GM12878 (cell line): ENCODE measurements at regions of chr15 and their contacts with region 1.

Region 1: GRCh38 chr15:40941528-40942336 is 11.5 kb upstream of the CHAC1 start:
- DNase-seq: no peak
- ATAC-seq: peak; percentile 82
- H3K4me3 ChIP-seq: peak overlapping the region; percentile 73
- H3K27ac ChIP-seq: peak overlapping the region; percentile 81
- H3K4me1 ChIP-seq: peaks cover 23% of the 10 kb centered on the region
- H3K27me3 ChIP-seq: no peaks in the 10 kb centered on the region
- CTCF ChIP-seq: peak; percentile 29 to 69 (median 43); a peak in 4 of 6 replicates
- EP300 ChIP-seq: no peak
- POLR2A ChIP-seq: peak; percentile 75
- RAD21 ChIP-seq: peak; percentile 58

Region 2: DNA sequence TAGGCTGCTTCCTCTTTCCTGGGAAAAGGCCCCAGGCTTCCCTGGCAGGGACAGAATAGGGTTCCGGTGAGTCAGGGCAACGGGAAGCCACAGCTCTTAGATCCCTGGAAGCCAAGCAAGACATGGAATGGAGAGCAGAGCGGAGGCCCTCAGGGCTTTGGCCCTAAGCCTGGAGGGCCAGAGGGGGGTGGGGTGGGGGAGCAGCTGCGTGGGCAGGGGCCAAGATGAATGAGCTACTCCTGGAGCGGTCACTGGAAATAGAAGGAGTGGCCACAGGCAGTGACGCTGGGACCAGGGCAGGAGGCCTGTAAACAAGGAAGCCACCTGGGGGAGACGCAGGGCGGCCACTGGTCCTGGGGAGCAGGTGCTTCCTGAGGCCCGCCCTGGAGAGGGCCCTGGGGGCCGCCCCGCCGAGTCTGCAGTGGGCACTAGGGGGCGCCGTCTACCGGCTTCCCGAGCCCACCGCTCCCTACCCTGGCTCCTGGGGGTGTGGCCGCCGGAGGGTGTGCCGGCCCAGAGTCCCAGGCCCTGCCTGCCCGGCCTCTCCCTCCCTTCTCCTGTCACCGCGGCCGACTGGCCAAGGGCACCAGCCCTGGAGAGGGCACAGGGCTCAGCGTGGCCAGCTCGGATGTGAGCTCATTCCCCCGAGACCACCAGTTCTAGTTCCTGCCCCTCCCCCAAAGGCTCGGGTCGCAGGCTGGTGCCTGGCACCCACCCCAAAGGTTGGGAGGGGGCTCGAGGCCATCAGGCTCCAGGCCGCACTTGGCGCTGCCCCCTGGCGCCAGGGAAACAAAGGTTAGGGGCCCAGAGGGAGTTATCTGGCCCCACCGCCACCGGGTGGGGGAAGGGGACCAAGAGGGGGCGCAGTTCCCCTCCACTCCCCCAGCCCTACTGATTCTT is 35.4 kb before region 1 on chr15:
- CTCF ChIA-PET with region 1: interaction called, 69 read pairs
- POLR2A ChIA-PET with region 1: interaction called, 3 read pairs
- RAD21 ChIA-PET with region 1: interaction called, 11 read pairs
- SMC1A ChIA-PET with region 1: interaction called, 18 read pairs
- in situ Hi-C with region 1: no loop called
- intact Hi-C with region 1: loop called (anchors 5 kb)
- DNase-seq: no peak
- ATAC-seq: peak; percentile 91
- H3K4me3 ChIP-seq: peak overlapping the region; percentile 60
- H3K27ac ChIP-seq: peak overlapping the region; percentile 49
- H3K4me1 ChIP-seq: peaks cover 24% of the 10 kb centered on the region
- H3K27me3 ChIP-seq: no peaks in the 10 kb centered on the region
- CTCF ChIP-seq: peak; percentile 73 to 90 (median 89)
- EP300 ChIP-seq: no peak
- POLR2A ChIP-seq: peak; percentile 52; the same call in 1 of the 2 replicates
- RAD21 ChIP-seq: peak; percentile 66

Region 3: DNA sequence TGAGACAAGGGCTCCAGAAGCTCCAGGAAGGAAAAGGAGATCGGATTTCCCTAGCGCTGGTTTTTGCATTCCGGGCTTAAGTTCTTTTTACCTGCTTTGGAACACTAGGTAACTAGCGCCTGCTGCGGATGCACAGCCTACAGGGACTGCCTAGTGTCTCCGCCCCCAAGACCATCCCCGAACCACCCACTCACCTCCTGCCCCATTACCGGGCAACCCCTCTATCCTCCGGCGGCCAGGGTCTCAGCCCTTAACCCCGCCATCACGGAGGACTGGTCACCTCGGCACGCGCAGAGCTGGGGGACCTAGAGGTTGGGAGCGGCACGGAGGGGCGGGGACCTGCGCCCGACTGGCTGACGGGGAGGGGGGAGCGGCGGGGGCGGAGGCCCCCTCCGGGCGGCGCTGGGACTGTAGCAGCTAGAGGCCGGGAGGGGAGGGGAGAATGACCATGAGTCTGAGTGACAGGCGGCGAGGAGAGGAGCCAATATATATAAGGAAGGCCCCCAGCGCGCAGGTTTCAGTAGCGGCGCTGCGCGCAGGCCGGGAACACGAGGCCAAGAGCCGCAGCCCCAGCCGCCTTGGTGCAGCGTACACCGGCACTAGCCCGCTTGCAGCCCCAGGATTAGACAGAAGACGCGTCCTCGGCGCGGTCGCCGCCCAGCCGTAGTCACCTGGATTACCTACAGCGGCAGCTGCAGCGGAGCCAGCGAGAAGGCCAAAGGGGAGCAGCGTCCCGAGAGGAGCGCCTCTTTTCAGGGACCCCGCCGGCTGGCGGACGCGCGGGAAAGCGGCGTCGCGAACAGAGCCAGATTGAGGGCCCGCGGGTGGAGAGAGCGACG is 12.7 kb before region 1 on chr15 and contains the start of gene DLL4:
- CTCF ChIA-PET with region 1: interaction called, 80 read pairs
- POLR2A ChIA-PET with region 1: interaction called, 11 read pairs
- RAD21 ChIA-PET with region 1: interaction called, 36 read pairs
- SMC1A ChIA-PET with region 1: interaction called, 28 read pairs
- in situ Hi-C with region 1: no loop called
- intact Hi-C with region 1: no loop called
- DNase-seq: no peak
- ATAC-seq: peak; percentile 54
- H3K4me3 ChIP-seq: peak within 1 kb of the TSS; percentile 64
- H3K27ac ChIP-seq: no peak within 1 kb of the TSS
- H3K4me1 ChIP-seq: peaks cover 33% of the 10 kb centered on the region
- H3K27me3 ChIP-seq: peaks cover 22 to 31% of the 10 kb centered on the region in 2 experiments
- CTCF ChIP-seq: no peak
- EP300 ChIP-seq: no peak
- POLR2A ChIP-seq: peak; percentile 78
- RAD21 ChIP-seq: no peak
- polyA plus RNA-seq, gene DLL4: not detected

Region 4: GRCh38 chr15:40964006-40964405 is 22.3 kb after region 1 on chr15:
- CTCF ChIA-PET with region 1: interaction called, 10 read pairs
- POLR2A ChIA-PET with region 1: no interaction called
- RAD21 ChIA-PET with region 1: no interaction called
- SMC1A ChIA-PET with region 1: interaction called, 3 read pairs
- in situ Hi-C with region 1: no loop called
- intact Hi-C with region 1: no loop called
- DNase-seq: no peak
- ATAC-seq: peak; percentile 33; the same call in 1 of the 3 replicates
- H3K4me3 ChIP-seq: no peak overlapping the region
- H3K27ac ChIP-seq: no peak overlapping the region
- H3K4me1 ChIP-seq: no peaks in the 10 kb centered on the region
- H3K27me3 ChIP-seq: no peaks in the 10 kb centered on the region; a peak in 1 of 4 replicates
- CTCF ChIP-seq: no peak
- EP300 ChIP-seq: no peak
- POLR2A ChIP-seq: no peak
- RAD21 ChIP-seq: no peak

Region 5: GRCh38 chr15:41022487-41023090 is 80.9 kb after region 1 on chr15:
- CTCF ChIA-PET with region 1: interaction called, 43 read pairs
- POLR2A ChIA-PET with region 1: no interaction called
- RAD21 ChIA-PET with region 1: interaction called, 6 read pairs
- SMC1A ChIA-PET with region 1: interaction called, 17 read pairs
- in situ Hi-C with region 1: no loop called
- intact Hi-C with region 1: loop called (anchors 5 kb)
- DNase-seq: peak; percentile 21
- ATAC-seq: peak; percentile 87
- H3K4me3 ChIP-seq: no peak overlapping the region
- H3K27ac ChIP-seq: no peak overlapping the region
- H3K4me1 ChIP-seq: no peaks in the 10 kb centered on the region
- H3K27me3 ChIP-seq: no peaks in the 10 kb centered on the region
- CTCF ChIP-seq: peak; percentile 73 to 90 (median 76); a peak in 5 of 6 replicates
- EP300 ChIP-seq: no peak
- POLR2A ChIP-seq: no peak
- RAD21 ChIP-seq: peak; percentile 87

Region 6: DNA sequence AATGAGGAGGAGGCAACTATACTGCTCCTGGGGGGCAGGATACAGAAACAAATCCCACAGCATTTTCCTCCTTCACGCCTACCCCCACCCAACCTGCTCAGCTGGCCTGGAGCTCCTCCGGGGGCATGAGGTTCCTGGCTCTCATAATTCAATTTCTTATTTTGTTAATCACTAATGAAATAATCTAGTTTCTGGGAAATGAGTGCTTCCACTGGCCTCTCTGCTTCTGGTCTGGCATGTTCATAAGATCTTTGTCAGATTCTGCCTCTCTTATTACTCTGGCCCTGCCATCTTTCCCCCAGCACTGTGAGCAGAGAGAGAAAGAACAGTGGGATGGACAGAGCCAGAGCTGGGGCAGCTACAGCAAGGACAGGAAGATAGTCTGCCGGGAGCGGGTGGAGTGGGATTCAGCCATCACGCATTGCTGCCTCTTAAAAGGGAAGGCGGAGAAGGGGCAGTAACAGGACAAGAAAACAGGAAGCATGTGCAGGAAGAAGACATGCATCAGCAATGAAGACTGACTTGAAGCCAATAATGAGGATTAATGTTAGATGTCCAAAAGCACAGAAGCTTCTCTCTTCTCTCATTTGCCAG is 588.7 kb after region 1 on chr15:
- CTCF ChIA-PET with region 1: no interaction called
- POLR2A ChIA-PET with region 1: no interaction called
- RAD21 ChIA-PET with region 1: no interaction called
- SMC1A ChIA-PET with region 1: no interaction called
- in situ Hi-C with region 1: no loop called
- intact Hi-C with region 1: no loop called
- DNase-seq: no peak
- ATAC-seq: no peak
- H3K4me3 ChIP-seq: no peak overlapping the region
- H3K27ac ChIP-seq: no peak overlapping the region
- H3K4me1 ChIP-seq: no peaks in the 10 kb centered on the region
- H3K27me3 ChIP-seq: no peaks in the 10 kb centered on the region
- CTCF ChIP-seq: no peak
- EP300 ChIP-seq: no peak
- POLR2A ChIP-seq: no peak
- RAD21 ChIP-seq: no peak